ENCODE measurements at regions of chrX and their contacts with region 1.

Region 1: GRCh38 chrX:72294497-72294896 is 11.2 kb downstream of the CITED1 start:
- DNase-seq: no peak
- H3K4me3 ChIP-seq: no peak overlapping the region
- H3K27ac ChIP-seq: no peak overlapping the region
- H3K4me1 ChIP-seq: no peaks in the 10 kb centered on the region
- H3K27me3 ChIP-seq: peaks cover 27% of the 10 kb centered on the region
- CTCF ChIP-seq: 0 out of 2 replicates have a peak, but pooled peaks have one; percentile 33

Region 2: DNA sequence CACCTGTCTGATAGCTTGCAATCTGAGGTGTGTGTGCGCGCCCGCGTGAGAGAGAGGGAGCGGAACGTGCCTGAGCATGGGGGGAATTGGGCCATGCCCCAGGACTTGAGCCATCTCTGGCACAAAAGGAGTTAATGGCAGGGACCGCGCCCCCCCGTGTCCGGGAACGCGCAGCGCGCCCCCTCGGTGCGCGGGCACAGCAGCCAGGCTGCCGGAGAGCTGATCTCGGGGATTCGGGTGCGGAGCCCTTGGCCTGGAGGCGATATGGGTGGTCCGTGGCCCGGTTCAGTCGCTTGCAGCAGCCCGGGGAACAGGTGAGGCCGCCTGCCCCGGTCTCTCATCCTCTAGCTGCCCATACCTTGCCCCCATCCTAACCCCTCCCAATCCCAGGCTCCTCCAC is 1149.8 kb before region 1 on chrX and contains the start of gene NLGN3:
- CTCF ChIA-PET with region 1: no interaction called
- POLR2A ChIA-PET with region 1: no interaction called
- intact Hi-C with region 1: no loop called
- DNase-seq: peak; percentile 11
- H3K4me3 ChIP-seq: peak within 1 kb of the TSS; percentile 17
- H3K27ac ChIP-seq: no peak within 1 kb of the TSS
- H3K4me1 ChIP-seq: peaks cover 4% of the 10 kb centered on the region
- H3K27me3 ChIP-seq: no peaks in the 10 kb centered on the region
- CTCF ChIP-seq: no peak
- total RNA-seq, gene NLGN3: 1.2 and 1.7 TPM in 2 replicates

Region 3: DNA sequence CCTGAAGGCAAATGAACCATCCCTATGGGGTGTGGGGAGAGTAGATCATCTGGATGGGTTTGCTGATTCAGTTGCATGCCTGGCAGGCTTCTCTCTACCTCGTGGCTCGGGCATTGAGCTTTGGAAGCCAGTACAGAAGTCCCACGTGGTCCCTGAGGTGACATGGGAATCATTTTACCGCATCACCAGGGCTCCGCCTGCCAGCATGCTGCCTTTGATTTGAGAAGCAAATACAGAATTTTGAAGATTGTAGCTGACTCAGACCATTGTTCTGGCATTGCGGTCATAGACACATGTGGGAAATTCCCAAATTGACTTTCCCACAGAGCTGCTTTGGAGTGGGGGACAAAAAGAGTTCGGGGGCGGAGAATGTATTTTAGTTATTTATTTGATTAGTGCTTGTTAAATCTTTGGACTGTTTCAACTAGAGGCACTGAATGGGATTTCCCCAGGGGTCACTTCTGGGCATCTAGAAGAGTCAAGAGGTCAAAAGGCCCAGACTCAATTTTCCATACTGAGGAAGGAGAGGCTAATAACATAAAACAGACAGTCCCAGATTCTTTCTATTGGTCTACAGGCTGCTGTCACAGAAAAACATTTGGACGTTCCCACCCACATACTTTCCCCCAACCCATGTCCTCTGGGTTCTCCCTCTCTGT is 304.6 kb before region 1 on chrX:
- CTCF ChIA-PET with region 1: no interaction called
- POLR2A ChIA-PET with region 1: no interaction called
- intact Hi-C with region 1: no loop called
- DNase-seq: peak; percentile 22
- H3K4me3 ChIP-seq: no peak overlapping the region
- H3K27ac ChIP-seq: no peak overlapping the region
- H3K4me1 ChIP-seq: no peaks in the 10 kb centered on the region
- H3K27me3 ChIP-seq: no peaks in the 10 kb centered on the region
- CTCF ChIP-seq: no peak

Region 4: GRCh38 chrX:72201836-72202536 is 92.5 kb before region 1 on chrX:
- CTCF ChIA-PET with region 1: interaction called, 10 read pairs
- POLR2A ChIA-PET with region 1: no interaction called
- intact Hi-C with region 1: no loop called
- DNase-seq: peak; percentile 80
- H3K4me3 ChIP-seq: no peak overlapping the region
- H3K27ac ChIP-seq: peak overlapping the region; percentile 67
- H3K4me1 ChIP-seq: peaks cover 5% of the 10 kb centered on the region
- H3K27me3 ChIP-seq: no peaks in the 10 kb centered on the region
- CTCF ChIP-seq: no peak

Measured in A673 (cell line).